Ascending aorta (tissue), 2 donors: ENCODE measurements at regions of chr15 and their contacts with region 1.

Region 1: GRCh38 chr15:38354315-38354929 is 99.5 kb upstream of the FAM98B start:
- DNase-seq: peak in 1 of 2 donors; percentile 72
- H3K4me3 ChIP-seq: no peak overlapping the region
- H3K27ac ChIP-seq: no peak overlapping the region
- H3K4me1 ChIP-seq: no peaks in the 10 kb centered on the region
- H3K27me3 ChIP-seq: no peaks in the 10 kb centered on the region
- CTCF ChIP-seq: peak; percentile 58 to 70 (median 58)

Region 2: DNA sequence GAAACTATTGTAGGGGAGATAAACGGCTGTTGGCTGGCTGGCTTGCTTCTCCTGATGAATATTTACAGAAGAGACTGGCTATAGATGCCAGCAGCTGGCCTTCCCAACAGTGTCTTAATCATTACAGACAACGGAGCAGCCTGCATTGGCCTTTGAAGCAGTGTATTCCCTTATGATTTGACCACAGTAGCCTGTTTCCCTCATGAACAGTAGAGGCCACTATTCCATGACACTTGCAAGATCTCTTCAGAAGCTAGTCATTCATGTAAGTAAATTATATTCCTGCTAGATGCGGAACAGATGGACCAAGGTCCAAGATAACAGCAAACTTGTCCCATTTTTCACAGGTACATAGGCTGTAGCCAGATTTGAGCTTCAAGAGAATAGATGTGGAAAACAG is 372.6 kb before region 1 on chr15:
- intact Hi-C with region 1: loop called (anchors 5 kb)
- DNase-seq: no peak
- H3K4me3 ChIP-seq: no peak overlapping the region
- H3K27ac ChIP-seq: no peak overlapping the region
- H3K4me1 ChIP-seq: peaks cover 0 to 3% of the 10 kb centered on the region in 2 donors
- H3K27me3 ChIP-seq: no peaks in the 10 kb centered on the region
- CTCF ChIP-seq: peak in 2 of 3 experiments; percentile 11 to 34

Region 3: DNA sequence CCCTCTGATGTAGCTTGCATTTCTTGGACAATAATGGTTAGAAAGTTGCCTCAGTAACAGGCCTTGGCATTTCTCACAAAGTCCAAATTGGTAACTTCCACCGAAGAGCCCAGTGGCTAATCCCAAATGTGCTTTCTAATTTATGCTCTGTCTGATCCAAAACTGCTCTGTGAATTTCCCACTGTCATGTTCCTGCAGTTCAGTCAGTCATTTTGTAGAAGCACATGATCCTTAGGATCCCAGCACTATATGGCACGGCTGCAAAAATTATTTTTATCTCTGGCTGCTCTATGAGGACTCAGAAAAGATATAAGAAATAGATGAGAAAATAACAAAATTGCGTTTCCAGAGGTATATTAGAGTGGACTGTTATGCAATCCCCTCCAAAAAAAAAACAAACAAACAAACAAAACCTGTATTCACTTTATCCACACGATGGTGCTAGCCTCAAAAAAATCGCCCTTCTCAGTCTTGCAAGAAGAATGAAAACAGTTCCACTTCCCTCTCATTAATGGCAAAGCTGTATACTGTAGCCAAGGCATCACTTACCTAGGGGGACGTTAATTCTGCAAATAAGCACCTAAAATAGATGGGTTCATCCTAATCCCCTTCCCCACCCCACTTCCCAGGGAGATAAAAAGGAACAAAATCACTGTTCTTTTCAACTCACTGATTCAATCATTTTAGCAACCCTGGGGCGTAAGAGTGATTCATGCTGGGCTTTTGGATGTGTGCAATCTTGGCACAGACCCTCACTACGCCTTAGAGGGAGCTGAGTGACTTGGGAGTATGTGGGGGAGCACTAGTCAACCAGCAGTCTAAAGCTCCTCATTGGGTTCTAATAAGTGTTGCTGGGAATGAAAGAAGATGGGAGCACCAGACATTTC is 358.7 kb before region 1 on chr15:
- intact Hi-C with region 1: loop called (anchors 2 kb)
- DNase-seq: no peak
- H3K4me3 ChIP-seq: no peak overlapping the region
- H3K27ac ChIP-seq: no peak overlapping the region
- H3K4me1 ChIP-seq: no peaks in the 10 kb centered on the region
- H3K27me3 ChIP-seq: no peaks in the 10 kb centered on the region
- CTCF ChIP-seq: peak in 2 of 3 experiments; percentile 64 to 77

Region 4: DNA sequence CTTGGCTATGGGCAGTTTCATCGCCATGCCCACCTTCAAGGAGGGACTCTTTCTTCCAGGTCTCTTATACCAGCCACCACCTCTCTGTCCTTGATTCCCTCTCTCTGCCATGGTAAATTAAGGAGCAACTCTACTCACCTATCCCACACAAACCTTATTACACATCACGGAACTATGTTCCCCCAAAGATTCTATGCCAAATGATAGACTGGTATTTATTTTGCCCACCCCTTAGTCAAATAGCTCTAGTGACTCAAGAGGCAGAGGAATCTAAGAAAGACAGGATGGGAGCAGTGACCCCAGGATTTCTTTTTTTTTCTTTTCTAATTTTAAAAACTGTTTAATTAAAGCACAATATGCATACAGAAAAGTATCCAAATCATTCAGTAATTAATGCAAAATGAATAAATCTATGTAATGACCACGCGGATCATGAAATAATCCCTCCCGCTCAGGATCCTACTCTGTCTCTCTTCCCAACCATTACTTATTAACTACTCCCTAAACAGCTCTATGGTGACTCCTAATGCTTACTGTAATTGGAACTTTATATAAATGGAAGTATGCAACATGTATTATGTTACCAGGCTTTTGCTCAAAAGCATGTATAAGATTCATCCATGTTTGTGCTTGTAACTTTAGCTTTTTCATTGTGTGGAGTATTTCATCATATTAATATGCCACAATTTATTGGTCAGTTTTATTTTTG is 621.0 kb after region 1 on chr15:
- intact Hi-C with region 1: no loop called
- DNase-seq: no peak
- H3K4me3 ChIP-seq: no peak overlapping the region
- H3K27ac ChIP-seq: no peak overlapping the region
- H3K4me1 ChIP-seq: no peaks in the 10 kb centered on the region
- H3K27me3 ChIP-seq: no peaks in the 10 kb centered on the region
- CTCF ChIP-seq: no peak